ENCODE measurements at regions of chr11 and their contacts with region 1.

Region 1: GRCh38 chr11:86041975-86042378 is 26.9 kb downstream of the PICALM start:
- DNase-seq: peak in 28 of 35 experiments; percentile 10 to 87 (median 38)
- ATAC-seq: peak; percentile 87 to 95 (median 90)
- H3K4me3 ChIP-seq: no peak overlapping the region
- H3K4me3 Mint-ChIP-seq: no peak overlapping the region
- H3K27ac ChIP-seq: peak overlapping the region; percentile 25
- H3K27ac Mint-ChIP-seq: peak overlapping the region; percentile 55 to 78
- H3K4me1 ChIP-seq: peaks cover 20 to 34% of the 10 kb centered on the region in 2 experiments
- H3K4me1 Mint-ChIP-seq: peaks cover 63 to 69% (median 69%) of the 10 kb centered on the region in 3 donors
- H3K27me3 ChIP-seq: no peaks in the 10 kb centered on the region
- H3K27me3 Mint-ChIP-seq: no peaks in the 10 kb centered on the region

Region 2: GRCh38 chr11:85809863-85810262 is 232.1 kb before region 1 on chr11:
- CTCF ChIA-PET with region 1: no interaction called
- POLR2A ChIA-PET with region 1: no interaction called
- DNase-seq: peak in 13 of 35 experiments; percentile 3 to 38 (median 21)
- ATAC-seq: peak in 2 of 4 experiments; percentile 15 to 24
- H3K4me3 ChIP-seq: peak overlapping the region; percentile 86 to 87
- H3K4me3 Mint-ChIP-seq: peak overlapping the region; percentile 89 to 92 (median 91)
- H3K27ac ChIP-seq: peak overlapping the region; percentile 62
- H3K27ac Mint-ChIP-seq: peak overlapping the region; percentile 83 to 91
- H3K4me1 ChIP-seq: peaks cover 12 to 31% of the 10 kb centered on the region in 2 experiments
- H3K4me1 Mint-ChIP-seq: peaks cover 40 to 54% (median 52%) of the 10 kb centered on the region in 3 donors
- H3K27me3 ChIP-seq: peaks cover 0 to 11% of the 10 kb centered on the region in 2 experiments
- H3K27me3 Mint-ChIP-seq: no peaks in the 10 kb centered on the region

Region 3: GRCh38 chr11:86068951-86069407 is 27.0 kb after region 1 on chr11 and contains the start of gene PICALM:
- CTCF ChIA-PET with region 1: interaction called, 8 to 75 read pairs
- POLR2A ChIA-PET with region 1: interaction called, 3 to 4 read pairs
- DNase-seq: peak; percentile 90 to 99 (median 95)
- ATAC-seq: peak; percentile 90 to 93 (median 91)
- H3K4me3 ChIP-seq: peak within 1 kb of the TSS; percentile 80 to 85
- H3K4me3 Mint-ChIP-seq: peak within 1 kb of the TSS; percentile 99
- H3K27ac ChIP-seq: peak within 1 kb of the TSS; percentile 90
- H3K27ac Mint-ChIP-seq: peak within 1 kb of the TSS; percentile 88 to 96
- H3K4me1 ChIP-seq: peaks cover 19 to 27% of the 10 kb centered on the region in 2 experiments
- H3K4me1 Mint-ChIP-seq: peaks cover 33 to 50% (median 36%) of the 10 kb centered on the region in 3 donors
- H3K27me3 ChIP-seq: no peaks in the 10 kb centered on the region
- H3K27me3 Mint-ChIP-seq: peaks cover 0 to 3% of the 10 kb centered on the region in 2 donors
- total RNA-seq, gene PICALM: 97.7 to 121 (median 105) TPM

Region 4: GRCh38 chr11:86193297-86194095 is 151.5 kb after region 1 on chr11:
- CTCF ChIA-PET with region 1: interaction called, 26 to 117 read pairs
- POLR2A ChIA-PET with region 1: no interaction called
- DNase-seq: peak in 34 of 35 experiments; percentile 19 to 83 (median 46)
- ATAC-seq: peak; percentile 99 to 100 (median 99)
- H3K4me3 ChIP-seq: peak overlapping the region in 1 of 2 donors; percentile 36
- H3K4me3 Mint-ChIP-seq: peak overlapping the region; percentile 73 to 80 (median 79)
- H3K27ac ChIP-seq: no peak overlapping the region
- H3K27ac Mint-ChIP-seq: peak overlapping the region; percentile 82 to 87
- H3K4me1 ChIP-seq: peaks cover 6 to 10% of the 10 kb centered on the region in 2 experiments
- H3K4me1 Mint-ChIP-seq: peaks cover 13 to 16% (median 16%) of the 10 kb centered on the region in 3 donors
- H3K27me3 ChIP-seq: no peaks in the 10 kb centered on the region
- H3K27me3 Mint-ChIP-seq: no peaks in the 10 kb centered on the region

Region 5: GRCh38 chr11:86291466-86292262 is 249.7 kb after region 1 on chr11:
- CTCF ChIA-PET with region 1: interaction called in 1 of 2 experiments, 17 read pairs
- POLR2A ChIA-PET with region 1: no interaction called
- DNase-seq: peak in 34 of 35 experiments; percentile 4 to 76 (median 47)
- ATAC-seq: peak; percentile 26 to 40 (median 34)
- H3K4me3 ChIP-seq: no peak overlapping the region
- H3K4me3 Mint-ChIP-seq: no peak overlapping the region
- H3K27ac ChIP-seq: no peak overlapping the region
- H3K27ac Mint-ChIP-seq: peak overlapping the region; percentile 36 to 44
- H3K4me1 ChIP-seq: peaks cover 0 to 15% of the 10 kb centered on the region in 2 experiments
- H3K4me1 Mint-ChIP-seq: peaks cover 15 to 48% (median 30%) of the 10 kb centered on the region in 3 donors
- H3K27me3 ChIP-seq: no peaks in the 10 kb centered on the region
- H3K27me3 Mint-ChIP-seq: no peaks in the 10 kb centered on the region

Region 6: DNA sequence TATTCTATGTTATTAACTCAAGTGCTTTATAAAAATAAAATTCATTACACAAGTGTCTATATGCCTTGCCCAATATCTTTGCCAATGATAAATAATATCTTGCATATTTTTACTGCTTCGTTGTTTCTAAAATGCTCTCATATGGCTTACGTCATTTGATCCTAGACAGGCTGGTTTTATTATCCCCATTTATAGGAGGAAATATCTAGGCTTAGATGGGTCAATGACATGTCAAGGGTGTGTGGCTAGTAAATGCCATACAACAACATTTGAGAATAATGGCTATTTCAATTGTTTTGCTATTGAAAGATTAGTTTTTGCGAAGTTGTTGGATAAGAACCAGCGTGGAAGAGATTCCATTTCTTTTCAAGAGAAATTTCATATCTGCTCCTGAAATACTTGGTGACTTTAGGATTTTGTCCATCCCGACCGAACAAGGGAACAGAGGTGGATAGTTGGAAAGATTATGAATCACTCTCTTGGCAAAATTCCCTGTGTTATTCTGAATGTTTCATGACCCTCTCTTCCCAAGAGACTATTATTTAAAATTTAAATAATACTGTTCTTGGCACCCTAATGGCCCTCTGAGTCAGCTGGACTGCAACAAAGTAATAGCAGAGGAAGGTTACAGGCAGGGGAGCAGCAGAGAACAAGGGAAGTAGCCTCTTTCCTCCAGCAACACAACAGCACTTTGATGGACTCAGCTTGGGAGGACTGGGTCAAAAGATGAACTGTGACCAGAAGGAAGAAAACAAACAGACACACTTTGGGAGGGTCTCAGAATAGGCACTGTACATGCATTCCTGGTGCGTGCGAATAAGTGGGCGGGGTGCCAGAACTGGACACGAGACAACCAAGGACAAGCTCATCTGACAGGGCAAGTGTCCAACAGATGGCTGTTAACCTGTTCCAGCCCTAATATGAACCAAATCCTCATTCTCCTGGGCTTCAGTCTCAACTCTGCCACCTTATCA is 536.0 kb after region 1 on chr11:
- CTCF ChIA-PET with region 1: no interaction called
- POLR2A ChIA-PET with region 1: no interaction called
- DNase-seq: no peak
- ATAC-seq: no peak
- H3K4me3 ChIP-seq: no peak overlapping the region
- H3K4me3 Mint-ChIP-seq: no peak overlapping the region
- H3K27ac ChIP-seq: no peak overlapping the region
- H3K27ac Mint-ChIP-seq: no peak overlapping the region
- H3K4me1 ChIP-seq: no peaks in the 10 kb centered on the region
- H3K4me1 Mint-ChIP-seq: no peaks in the 10 kb centered on the region
- H3K27me3 ChIP-seq: peaks cover 0 to 5% of the 10 kb centered on the region in 2 experiments
- H3K27me3 Mint-ChIP-seq: peaks cover 0 to 5% of the 10 kb centered on the region in 2 donors